KBM-7 (cell line): ENCODE measurements at regions of chr1 and their contacts with region 1.

Region 1: GRCh38 chr1:109655601-109656519 is at the start of gene GSTM4:
- DNase-seq: peak; percentile 79

Region 2: GRCh38 chr1:109312978-109313775 is 342.7 kb before region 1 on chr1:
- in situ Hi-C with region 1: no loop called
- DNase-seq: no peak

Region 3: DNA sequence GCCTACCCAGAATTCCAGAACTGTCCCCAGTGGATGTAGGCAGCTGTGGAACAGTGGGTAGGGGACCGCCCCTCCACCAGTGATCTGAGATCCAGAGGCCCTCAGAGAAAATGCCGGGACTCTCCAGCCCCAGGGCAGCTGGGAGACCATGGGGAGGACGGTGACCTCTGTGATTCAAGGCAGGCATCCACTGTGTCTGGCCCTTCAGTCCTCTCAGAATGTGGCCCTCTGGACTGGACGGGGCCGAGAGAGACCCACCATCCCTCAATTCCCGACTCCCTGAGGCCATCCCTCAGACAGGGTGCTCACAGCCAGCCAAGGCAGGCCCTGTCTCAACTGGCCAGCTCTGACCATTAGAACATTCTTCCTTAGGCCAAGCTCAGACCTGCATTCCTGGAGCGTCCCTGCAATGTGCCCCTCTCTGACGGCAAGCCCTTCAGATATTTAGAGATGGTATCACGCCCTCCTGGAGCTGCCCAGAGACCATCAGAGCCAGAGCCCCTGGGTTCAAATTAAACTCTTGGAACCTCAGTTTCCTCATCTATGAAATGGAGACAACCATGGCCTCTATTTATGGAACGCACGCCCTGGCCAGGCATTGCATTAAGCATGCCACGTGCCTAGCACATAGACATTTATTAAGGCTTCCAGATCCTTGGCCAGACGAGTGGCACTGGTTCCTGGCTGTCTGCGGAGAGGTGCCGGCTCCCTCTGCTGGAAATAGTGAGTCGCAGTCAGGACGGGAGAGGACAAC is 117.5 kb after region 1 on chr1:
- in situ Hi-C with region 1: loop called (anchors 25 kb)
- DNase-seq: peak; percentile 83